HCT116 (cell line): ENCODE measurements at regions of chr5 and their contacts with region 1.

Region 1: DNA sequence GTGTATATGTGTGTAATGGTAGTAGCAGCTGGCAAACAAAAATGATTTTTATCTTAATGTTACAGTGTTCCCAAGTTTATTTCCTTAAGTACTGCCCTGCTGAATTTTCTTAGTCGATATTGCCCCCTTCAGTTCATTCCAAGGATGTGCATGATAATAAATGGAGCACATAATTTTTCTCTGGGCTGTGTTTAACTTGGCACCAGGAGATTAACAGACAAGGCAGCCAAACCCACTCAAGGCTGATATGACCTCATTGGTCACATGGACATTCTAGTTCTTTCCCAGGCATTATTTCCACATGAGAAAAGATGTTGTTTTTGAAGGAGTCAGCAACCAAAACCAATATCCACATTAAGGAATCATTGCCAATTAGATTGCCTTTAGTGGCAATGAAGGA is 61.8 kb downstream of the COX7C start:
- DNase-seq: peak; percentile 55
- ATAC-seq: peak; percentile 84
- H3K4me3 ChIP-seq: no peak overlapping the region
- H3K27ac ChIP-seq: no peak overlapping the region
- H3K4me1 ChIP-seq: no peaks in the 10 kb centered on the region
- H3K27me3 ChIP-seq: no peaks in the 10 kb centered on the region
- CTCF ChIP-seq: peak; percentile 50 to 74 (median 60); a peak in 5 of 6 replicates
- POLR2A ChIP-seq: no peak
- RAD21 ChIP-seq: peak; percentile 80

Region 2: GRCh38 chr5:86565197-86565789 is 114.2 kb before region 1 on chr5:
- CTCF ChIA-PET with region 1: interaction called, 3 read pairs
- POLR2A ChIA-PET with region 1: no interaction called
- RAD21 ChIA-PET with region 1: no interaction called
- intact Hi-C with region 1: loop called (anchors 10 kb)
- DNase-seq: no peak
- ATAC-seq: no peak
- H3K4me3 ChIP-seq: no peak overlapping the region
- H3K27ac ChIP-seq: no peak overlapping the region
- H3K4me1 ChIP-seq: no peaks in the 10 kb centered on the region
- H3K27me3 ChIP-seq: no peaks in the 10 kb centered on the region
- CTCF ChIP-seq: no peak
- POLR2A ChIP-seq: no peak
- RAD21 ChIP-seq: no peak